Activated naive CD4-positive, alpha-beta T cell treated with anti-CD3 and anti-CD28 coated beads, Interleukin-2, amount 10 ng/mL, durations not matched to agents 7 days and 5 days (primary cell): ENCODE measurements at regions of chr14 and their contacts with region 1.

Region 1: GRCh38 chr14:91418387-91419043 is 895 bp upstream of the CCDC88C start:
- DNase-seq: peak; percentile 84
- H3K4me3 Mint-ChIP-seq: peak overlapping the region; percentile 69
- H3K27ac Mint-ChIP-seq: peak overlapping the region; percentile 91
- H3K4me1 Mint-ChIP-seq: peaks cover 35% of the 10 kb centered on the region
- H3K27me3 Mint-ChIP-seq: peaks cover 11% of the 10 kb centered on the region

Region 2: GRCh38 chr14:91373591-91374254 is 44.8 kb before region 1 on chr14:
- CTCF ChIA-PET with region 1: interaction called, 11 read pairs
- DNase-seq: peak; percentile 71
- H3K4me3 Mint-ChIP-seq: peak overlapping the region; percentile 72
- H3K27ac Mint-ChIP-seq: peak overlapping the region; percentile 95
- H3K4me1 Mint-ChIP-seq: peaks cover 100% of the 10 kb centered on the region
- H3K27me3 Mint-ChIP-seq: no peaks in the 10 kb centered on the region

Region 3: DNA sequence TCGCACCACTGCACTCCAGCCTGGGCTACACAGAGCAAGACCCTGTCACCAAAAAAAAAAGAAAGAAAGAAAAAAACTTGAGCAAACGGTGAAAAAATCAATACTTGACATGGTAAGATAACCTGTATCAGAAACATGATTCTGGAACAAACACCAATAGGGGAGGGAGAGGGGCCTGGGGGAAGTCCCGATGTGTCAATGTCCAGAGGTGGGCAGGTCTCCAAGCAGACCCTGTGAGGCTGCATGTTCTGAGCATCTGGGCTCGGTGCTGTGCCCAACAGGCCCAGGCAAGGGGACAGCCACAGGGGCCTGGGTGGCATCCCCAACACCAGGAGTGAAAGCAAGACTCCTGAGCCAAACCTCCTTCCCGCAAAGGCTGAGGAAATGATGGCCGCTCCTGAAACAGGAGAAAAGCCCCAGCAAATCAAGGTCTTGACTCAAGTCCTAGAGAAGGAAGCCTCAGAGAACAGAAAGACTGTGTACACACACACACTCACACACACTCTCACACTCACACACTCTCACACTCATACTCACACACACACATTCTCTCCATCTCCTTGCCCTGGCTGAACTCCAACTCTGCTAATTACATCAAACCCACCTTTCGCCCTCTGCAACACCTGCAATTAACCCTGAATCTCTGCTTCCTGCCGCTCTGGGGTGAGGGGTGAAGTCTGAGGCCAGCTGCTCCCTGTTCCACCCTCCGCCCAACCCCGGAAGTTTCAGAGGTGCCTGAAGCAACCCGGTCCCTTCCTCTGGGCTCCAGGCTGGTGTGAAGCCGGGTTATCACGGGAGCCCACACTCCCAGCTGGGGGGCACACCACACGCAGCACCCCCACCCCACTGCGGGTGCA is 21.3 kb before region 1 on chr14:
- CTCF ChIA-PET with region 1: interaction called, 44 read pairs
- DNase-seq: peak; percentile 87
- H3K4me3 Mint-ChIP-seq: peak overlapping the region; percentile 72
- H3K27ac Mint-ChIP-seq: peak overlapping the region; percentile 90
- H3K4me1 Mint-ChIP-seq: peaks cover 93% of the 10 kb centered on the region
- H3K27me3 Mint-ChIP-seq: no peaks in the 10 kb centered on the region

Region 4: GRCh38 chr14:91554535-91555332 is 136.2 kb after region 1 on chr14:
- CTCF ChIA-PET with region 1: no interaction called
- DNase-seq: no peak
- H3K4me3 Mint-ChIP-seq: no peak overlapping the region
- H3K27ac Mint-ChIP-seq: no peak overlapping the region
- H3K4me1 Mint-ChIP-seq: no peaks in the 10 kb centered on the region
- H3K27me3 Mint-ChIP-seq: peaks cover 11% of the 10 kb centered on the region